Gastrocnemius medialis (tissue), 4 donors: ENCODE measurements at regions of chr3 and their contacts with region 1.

Region 1: DNA sequence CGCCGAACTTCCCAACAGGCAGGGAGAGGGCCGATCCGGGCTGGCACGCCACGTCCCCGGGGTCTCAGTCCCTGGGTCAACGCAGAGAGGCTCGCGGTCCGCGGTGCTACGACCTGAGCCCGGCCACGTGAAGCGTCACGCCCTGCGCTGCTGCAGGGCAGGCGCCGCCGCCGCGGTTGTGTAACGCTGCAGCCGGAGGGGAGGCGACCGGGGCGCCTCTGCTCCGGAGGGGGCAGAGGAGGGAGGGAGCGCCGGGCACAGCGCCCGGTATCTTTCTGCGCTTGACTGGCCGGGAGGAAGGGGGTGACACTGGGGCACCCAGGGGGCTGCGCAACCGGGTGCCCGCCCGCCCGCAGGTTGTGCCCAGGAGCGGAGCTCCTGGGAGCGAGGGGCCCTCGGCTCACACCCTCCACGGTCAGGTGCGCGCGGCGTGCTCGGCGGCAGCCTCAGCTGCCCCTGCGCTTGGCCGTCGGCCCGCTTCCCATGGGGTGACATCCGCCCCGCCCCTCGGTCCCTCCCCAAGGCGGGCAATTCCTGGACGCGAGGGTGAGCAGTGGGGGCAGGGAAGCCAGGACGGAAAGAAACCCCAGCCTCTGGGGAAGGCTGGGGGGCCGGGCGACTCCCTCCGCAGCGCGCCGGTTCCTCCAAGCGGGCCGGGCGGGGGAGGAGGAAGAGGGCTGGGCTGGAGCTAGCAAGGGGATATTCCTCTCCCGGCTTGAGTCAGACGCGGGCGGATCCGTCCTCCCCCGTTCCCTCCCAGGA is 852 bp upstream of the BHLHE40 start:
- DNase-seq: peak; percentile 94 to 96
- ATAC-seq: peak; percentile 37 to 45
- H3K4me3 ChIP-seq: peak overlapping the region; percentile 69 to 95 (median 88)
- H3K27ac ChIP-seq: peak overlapping the region; percentile 96 to 100 (median 99)
- H3K4me1 ChIP-seq: peaks cover 17 to 39% of the 10 kb centered on the region in 2 donors
- H3K27me3 ChIP-seq: no peaks in the 10 kb centered on the region
- CTCF ChIP-seq: peak in 1 of 5 experiments; percentile 53
- POLR2A ChIP-seq: peak; percentile 54 to 74

Region 2: DNA sequence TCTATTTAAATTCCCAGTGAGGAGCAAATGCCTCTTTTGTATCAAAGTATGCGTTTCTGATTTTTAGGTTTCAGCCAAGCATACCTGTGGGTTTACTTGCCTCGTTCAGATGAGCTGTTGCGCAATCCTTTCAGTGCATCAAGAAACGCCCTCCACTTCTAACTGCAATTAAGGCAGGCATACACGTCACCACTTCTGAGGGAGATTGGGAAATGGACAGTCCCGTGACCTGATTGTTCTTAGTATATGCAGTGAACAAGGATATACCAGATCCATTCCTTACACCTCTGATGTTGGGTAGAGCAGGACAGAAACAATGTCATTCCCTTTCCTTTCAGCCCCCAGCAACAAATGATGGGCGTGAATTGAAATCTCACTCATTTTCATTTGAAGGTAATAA is 266.2 kb before region 1 on chr3:
- in situ Hi-C with region 1: loop called in 2 of 4 experiments (anchors 5 to 10 kb)
- intact Hi-C with region 1: no loop called
- DNase-seq: no peak
- ATAC-seq: no peak
- H3K4me3 ChIP-seq: no peak overlapping the region
- H3K27ac ChIP-seq: no peak overlapping the region
- H3K4me1 ChIP-seq: peaks cover 6 to 9% of the 10 kb centered on the region in 2 donors
- H3K27me3 ChIP-seq: no peaks in the 10 kb centered on the region
- CTCF ChIP-seq: no peak
- POLR2A ChIP-seq: no peak

Region 3: GRCh38 chr3:4807381-4808280 is 170.8 kb before region 1 on chr3:
- in situ Hi-C with region 1: no loop called
- intact Hi-C with region 1: loop called (anchors 2 kb)
- DNase-seq: peak; percentile 45 to 81
- ATAC-seq: peak; percentile 82 to 90
- H3K4me3 ChIP-seq: no peak overlapping the region
- H3K27ac ChIP-seq: peak overlapping the region; percentile 76 to 89 (median 80)
- H3K4me1 ChIP-seq: peaks cover 16 to 31% of the 10 kb centered on the region in 2 donors
- H3K27me3 ChIP-seq: no peaks in the 10 kb centered on the region
- CTCF ChIP-seq: peak in 4 of 5 experiments; percentile 25 to 46 (median 33)
- POLR2A ChIP-seq: peak; percentile 9 to 46

Region 4: GRCh38 chr3:4988931-4989834 is 10.8 kb after region 1 on chr3:
- in situ Hi-C with region 1: no loop called
- intact Hi-C with region 1: loop called (anchors 1 kb)
- DNase-seq: peak; percentile 95 to 97
- ATAC-seq: peak; percentile 63 to 73
- H3K4me3 ChIP-seq: no peak overlapping the region
- H3K27ac ChIP-seq: peak overlapping the region; percentile 96 to 100 (median 99)
- H3K4me1 ChIP-seq: peaks cover 48 to 67% of the 10 kb centered on the region in 2 donors
- H3K27me3 ChIP-seq: no peaks in the 10 kb centered on the region
- CTCF ChIP-seq: no peak
- POLR2A ChIP-seq: peak; percentile 70 to 72

Region 5: GRCh38 chr3:5051772-5052171 is 73.4 kb after region 1 on chr3:
- in situ Hi-C with region 1: loop called in 1 of 4 experiments (anchors 5 kb)
- intact Hi-C with region 1: loop called (anchors 1 kb)
- DNase-seq: peak; percentile 91 to 95
- ATAC-seq: peak; percentile 91 to 94
- H3K4me3 ChIP-seq: no peak overlapping the region
- H3K27ac ChIP-seq: peak overlapping the region; percentile 83 to 92 (median 86)
- H3K4me1 ChIP-seq: peaks cover 43 to 48% of the 10 kb centered on the region in 2 donors
- H3K27me3 ChIP-seq: no peaks in the 10 kb centered on the region
- CTCF ChIP-seq: peak in 1 of 5 experiments; percentile 10
- POLR2A ChIP-seq: peak in 1 of 2 donors; percentile 35

Region 6: GRCh38 chr3:5122030-5122740 is 143.8 kb after region 1 on chr3 and contains the start of gene ARL8B:
- in situ Hi-C with region 1: loop called in 1 of 4 experiments (anchors 5 kb)
- intact Hi-C with region 1: loop called (anchors 1 kb)
- DNase-seq: peak; percentile 82 to 89
- ATAC-seq: peak; percentile 70 to 75
- H3K4me3 ChIP-seq: peak within 1 kb of the TSS; percentile 90 to 100 (median 98)
- H3K27ac ChIP-seq: peak within 1 kb of the TSS; percentile 96 to 100 (median 98)
- H3K4me1 ChIP-seq: peaks cover 34 to 40% of the 10 kb centered on the region in 2 donors
- H3K27me3 ChIP-seq: no peaks in the 10 kb centered on the region
- CTCF ChIP-seq: peak; percentile 89 to 98 (median 98)
- POLR2A ChIP-seq: peak; percentile 91 to 96
- total RNA-seq, gene ARL8B: 69.3 to 198 (median 95.0) TPM

Region 7: DNA sequence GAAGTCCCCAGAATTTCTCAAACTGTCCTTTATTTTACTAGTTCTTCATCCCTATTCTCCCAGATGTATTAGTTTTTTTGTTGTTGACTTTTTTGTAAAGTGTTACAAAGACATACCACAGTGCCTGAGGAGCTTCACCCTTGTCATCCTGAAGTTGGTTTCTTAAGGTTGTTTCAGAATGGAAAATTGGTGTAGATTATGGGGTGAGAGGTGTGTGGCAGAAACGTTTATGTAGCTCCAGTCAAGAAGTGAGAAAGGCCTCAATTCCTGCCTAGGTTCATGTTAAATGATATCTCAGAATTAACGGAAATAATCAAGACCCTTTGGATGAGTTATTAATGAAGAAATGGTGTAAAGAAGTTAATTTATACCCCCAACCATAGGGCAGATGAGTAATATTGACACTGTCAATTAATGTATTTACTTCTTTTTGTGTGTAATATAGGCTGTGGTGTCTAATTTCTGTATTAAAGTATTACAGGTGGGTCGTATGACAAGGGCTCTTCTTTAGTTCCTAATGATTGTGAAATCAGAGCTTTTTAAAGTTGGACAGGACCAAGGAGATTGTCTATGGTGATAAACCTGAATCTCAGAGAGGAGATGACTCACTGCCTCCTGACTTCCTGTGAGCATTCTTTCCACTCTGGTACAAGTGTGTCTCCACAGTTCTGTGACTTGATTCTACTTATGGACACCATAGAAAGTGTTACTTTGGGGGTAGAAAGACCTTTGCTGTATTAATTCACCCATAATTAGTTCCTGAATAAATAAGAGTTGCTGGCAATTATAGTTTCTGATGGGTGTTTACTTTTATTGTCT is 216.2 kb after region 1 on chr3:
- in situ Hi-C with region 1: loop called in 1 of 4 experiments (anchors 25 kb)
- intact Hi-C with region 1: loop called (anchors 5 kb)
- DNase-seq: peak; percentile 69 to 70
- ATAC-seq: peak; percentile 97 to 98
- H3K4me3 ChIP-seq: no peak overlapping the region
- H3K27ac ChIP-seq: peak overlapping the region; percentile 79 to 88 (median 82)
- H3K4me1 ChIP-seq: peaks cover 49 to 51% of the 10 kb centered on the region in 2 donors
- H3K27me3 ChIP-seq: no peaks in the 10 kb centered on the region
- CTCF ChIP-seq: no peak
- POLR2A ChIP-seq: peak in 1 of 2 donors; percentile 39

Region 8: DNA sequence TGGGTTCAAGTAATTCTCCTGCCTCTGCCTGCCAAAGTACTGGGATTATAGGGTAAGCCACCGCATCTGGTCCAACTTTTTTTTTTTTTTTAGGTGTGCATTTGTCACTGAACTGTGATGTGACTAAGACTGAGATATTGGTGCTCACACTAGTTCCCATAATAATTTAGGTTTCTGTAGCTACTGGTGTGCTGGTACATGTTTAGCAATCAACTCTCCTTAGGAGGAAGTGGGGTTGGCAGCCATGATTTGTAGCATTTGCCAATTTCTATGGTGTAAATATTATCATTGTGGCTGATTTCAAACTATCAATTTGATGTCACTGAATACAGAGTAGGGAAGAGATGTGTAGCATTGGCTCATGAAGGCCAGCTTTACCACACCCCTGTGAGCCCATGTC is 581.8 kb after region 1 on chr3:
- in situ Hi-C with region 1: no loop called
- intact Hi-C with region 1: no loop called
- DNase-seq: no peak
- ATAC-seq: no peak
- H3K4me3 ChIP-seq: no peak overlapping the region
- H3K27ac ChIP-seq: no peak overlapping the region
- H3K4me1 ChIP-seq: no peaks in the 10 kb centered on the region
- H3K27me3 ChIP-seq: no peaks in the 10 kb centered on the region
- CTCF ChIP-seq: no peak
- POLR2A ChIP-seq: no peak